B cell (primary cell): ENCODE measurements at regions of chr9 and their contacts with region 1.

Region 1: DNA sequence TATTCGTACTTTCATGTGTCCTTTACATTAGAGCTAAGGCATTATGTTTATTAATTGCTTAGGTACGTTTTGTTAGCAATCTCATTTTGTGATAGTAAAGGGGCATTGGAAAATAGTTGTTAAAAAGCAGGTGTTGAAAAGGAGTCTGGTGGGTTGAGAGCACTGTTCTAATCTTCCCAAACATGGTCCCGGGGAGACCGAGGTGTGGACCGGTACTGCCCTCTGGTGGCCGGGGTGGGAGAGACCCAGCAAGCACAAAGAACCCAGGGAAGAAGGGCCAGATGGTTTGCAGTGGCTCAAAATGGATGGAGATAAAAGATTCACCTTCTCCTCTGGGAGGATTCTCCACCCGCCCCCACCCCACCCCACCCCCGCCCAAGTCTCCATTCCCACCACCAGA is 26.1 kb downstream of the IDNK start:
- DNase-seq: peak; percentile 72
- ATAC-seq: peak; percentile 88
- H3K4me3 ChIP-seq: no peak overlapping the region
- H3K4me3 Mint-ChIP-seq: no peak overlapping the region
- H3K27ac ChIP-seq: no peak overlapping the region
- H3K27ac Mint-ChIP-seq: no peak overlapping the region
- H3K4me1 ChIP-seq: no peaks in the 10 kb centered on the region
- H3K4me1 Mint-ChIP-seq: peaks cover 5% of the 10 kb centered on the region
- H3K27me3 ChIP-seq: no peaks in the 10 kb centered on the region
- H3K27me3 Mint-ChIP-seq: no peaks in the 10 kb centered on the region
- CTCF ChIP-seq: peak; percentile 76

Region 2: DNA sequence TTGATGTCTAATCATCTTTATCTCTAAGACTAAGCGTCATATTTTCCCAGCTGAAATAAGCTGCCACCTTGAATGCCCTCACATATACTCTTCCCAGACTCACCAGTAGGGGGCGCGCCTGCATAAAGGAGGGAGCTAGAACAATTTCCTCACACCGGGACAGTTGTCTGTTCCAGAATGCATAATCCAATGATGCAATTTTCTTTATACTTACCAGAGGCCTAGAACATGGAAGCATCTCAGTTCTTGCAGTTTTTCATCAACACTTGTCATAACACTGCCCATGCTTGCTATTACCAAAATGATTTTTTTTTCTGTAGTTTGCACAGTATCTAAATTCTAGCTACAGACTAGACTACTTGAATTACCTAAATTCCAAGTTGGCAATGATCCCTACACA is 314.8 kb before region 1 on chr9:
- CTCF ChIA-PET with region 1: interaction called, 7 read pairs
- POLR2A ChIA-PET with region 1: no interaction called
- intact Hi-C with region 1: loop called (anchors 5 kb)
- DNase-seq: peak; percentile 56
- ATAC-seq: no peak
- H3K4me3 ChIP-seq: no peak overlapping the region
- H3K4me3 Mint-ChIP-seq: no peak overlapping the region
- H3K27ac ChIP-seq: no peak overlapping the region
- H3K27ac Mint-ChIP-seq: no peak overlapping the region
- H3K4me1 ChIP-seq: no peaks in the 10 kb centered on the region
- H3K4me1 Mint-ChIP-seq: no peaks in the 10 kb centered on the region
- H3K27me3 ChIP-seq: no peaks in the 10 kb centered on the region
- H3K27me3 Mint-ChIP-seq: no peaks in the 10 kb centered on the region
- CTCF ChIP-seq: peak; percentile 67

Region 3: DNA sequence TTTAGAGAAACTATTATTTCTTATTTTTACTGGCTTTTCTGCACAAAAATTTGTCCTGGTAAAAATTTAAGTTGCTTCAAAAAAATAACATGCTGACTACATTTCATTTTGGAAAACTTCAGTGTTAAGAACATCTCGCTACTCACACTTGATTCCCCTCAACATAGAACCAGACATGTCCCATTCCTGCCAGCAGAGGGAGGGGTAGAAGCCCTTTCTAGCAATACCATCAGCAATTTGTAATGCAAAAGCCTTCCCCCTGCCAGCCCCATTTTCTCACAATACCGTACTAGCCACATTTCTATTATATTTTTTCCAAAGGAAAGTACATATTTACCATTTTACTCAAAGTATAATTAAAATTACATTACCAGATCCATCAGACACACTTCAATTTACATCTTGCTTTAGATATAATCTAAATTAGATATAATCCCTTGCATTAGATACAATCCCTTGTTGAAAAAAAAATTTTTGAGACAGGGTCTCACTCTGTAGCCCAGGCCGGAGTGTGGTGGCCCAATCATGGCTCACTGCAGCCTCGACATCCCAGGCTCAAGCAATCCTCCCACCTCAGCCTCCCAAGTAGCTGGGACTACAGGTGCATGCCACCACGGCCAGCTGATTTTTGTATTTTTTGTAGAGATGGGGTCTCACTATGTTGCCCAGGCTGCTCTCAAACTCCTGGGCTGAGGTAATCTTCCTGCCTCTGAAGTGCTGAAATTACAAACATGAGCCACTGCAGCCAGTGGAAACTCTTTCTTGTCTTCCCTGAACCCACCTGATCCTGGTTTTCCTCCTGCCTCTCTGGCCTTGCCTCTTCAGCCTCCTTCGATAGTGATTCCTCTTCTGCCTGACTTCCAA is 65.7 kb before region 1 on chr9:
- CTCF ChIA-PET with region 1: interaction called, 3 read pairs
- POLR2A ChIA-PET with region 1: no interaction called
- intact Hi-C with region 1: loop called (anchors 1 kb)
- DNase-seq: peak; percentile 44
- ATAC-seq: peak; percentile 31
- H3K4me3 ChIP-seq: no peak overlapping the region
- H3K4me3 Mint-ChIP-seq: no peak overlapping the region
- H3K27ac ChIP-seq: no peak overlapping the region
- H3K27ac Mint-ChIP-seq: no peak overlapping the region
- H3K4me1 ChIP-seq: no peaks in the 10 kb centered on the region
- H3K4me1 Mint-ChIP-seq: no peaks in the 10 kb centered on the region
- H3K27me3 ChIP-seq: no peaks in the 10 kb centered on the region
- H3K27me3 Mint-ChIP-seq: no peaks in the 10 kb centered on the region
- CTCF ChIP-seq: peak; percentile 76

Region 4: GRCh38 chr9:83622939-83623678 is 26.0 kb before region 1 on chr9 and contains the start of gene IDNK:
- CTCF ChIA-PET with region 1: interaction called, 78 read pairs
- POLR2A ChIA-PET with region 1: interaction called, 3 read pairs
- intact Hi-C with region 1: loop called (anchors 1 kb)
- DNase-seq: peak; percentile 85
- ATAC-seq: peak; percentile 88
- H3K4me3 ChIP-seq: peak within 1 kb of the TSS; percentile 47 to 87 (median 79)
- H3K4me3 Mint-ChIP-seq: peak within 1 kb of the TSS; percentile 94
- H3K27ac ChIP-seq: peak within 1 kb of the TSS; percentile 76 to 88
- H3K27ac Mint-ChIP-seq: peak within 1 kb of the TSS; percentile 98
- H3K4me1 ChIP-seq: peaks cover 9 to 21% of the 10 kb centered on the region in 2 donors
- H3K4me1 Mint-ChIP-seq: peaks cover 33% of the 10 kb centered on the region
- H3K27me3 ChIP-seq: no peaks in the 10 kb centered on the region
- H3K27me3 Mint-ChIP-seq: no peaks in the 10 kb centered on the region
- CTCF ChIP-seq: no peak
- total RNA-seq, gene IDNK: 11.2 and 11.6 TPM in 2 replicates

Region 5: GRCh38 chr9:83636813-83637212 is 12.3 kb before region 1 on chr9:
- CTCF ChIA-PET with region 1: interaction called, 30 read pairs
- POLR2A ChIA-PET with region 1: no interaction called
- intact Hi-C with region 1: no loop called
- DNase-seq: no peak
- ATAC-seq: no peak
- H3K4me3 ChIP-seq: no peak overlapping the region
- H3K4me3 Mint-ChIP-seq: no peak overlapping the region
- H3K27ac ChIP-seq: no peak overlapping the region
- H3K27ac Mint-ChIP-seq: no peak overlapping the region
- H3K4me1 ChIP-seq: no peaks in the 10 kb centered on the region
- H3K4me1 Mint-ChIP-seq: no peaks in the 10 kb centered on the region
- H3K27me3 ChIP-seq: no peaks in the 10 kb centered on the region
- H3K27me3 Mint-ChIP-seq: no peaks in the 10 kb centered on the region
- CTCF ChIP-seq: no peak

Region 6: DNA sequence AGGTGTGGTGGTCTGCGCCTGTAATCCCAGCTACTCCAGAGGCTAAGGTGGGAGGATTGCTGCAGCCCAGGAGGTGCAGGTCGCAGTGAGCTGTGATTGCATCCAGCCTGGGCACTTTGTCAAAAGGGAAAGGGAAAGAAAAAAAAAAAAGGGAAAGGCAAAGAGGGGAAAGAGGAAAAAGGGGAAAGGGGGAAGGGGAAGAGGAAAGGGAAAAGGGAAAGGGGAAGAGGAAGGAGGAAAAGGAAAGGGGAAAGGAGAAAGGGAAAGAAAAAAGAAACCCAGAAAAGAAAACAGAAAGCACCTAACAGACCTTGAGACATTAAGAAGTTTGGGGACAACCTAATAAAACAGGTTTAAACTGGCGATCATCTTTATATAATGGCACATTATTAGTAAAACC is 13.9 kb after region 1 on chr9:
- CTCF ChIA-PET with region 1: interaction called, 12 read pairs
- POLR2A ChIA-PET with region 1: no interaction called
- intact Hi-C with region 1: no loop called
- DNase-seq: no peak
- ATAC-seq: no peak
- H3K4me3 ChIP-seq: no peak overlapping the region
- H3K4me3 Mint-ChIP-seq: no peak overlapping the region
- H3K27ac ChIP-seq: no peak overlapping the region
- H3K27ac Mint-ChIP-seq: no peak overlapping the region
- H3K4me1 ChIP-seq: peaks cover 10 to 12% of the 10 kb centered on the region in 2 donors
- H3K4me1 Mint-ChIP-seq: peaks cover 21% of the 10 kb centered on the region
- H3K27me3 ChIP-seq: no peaks in the 10 kb centered on the region
- H3K27me3 Mint-ChIP-seq: no peaks in the 10 kb centered on the region
- CTCF ChIP-seq: no peak

Region 7: DNA sequence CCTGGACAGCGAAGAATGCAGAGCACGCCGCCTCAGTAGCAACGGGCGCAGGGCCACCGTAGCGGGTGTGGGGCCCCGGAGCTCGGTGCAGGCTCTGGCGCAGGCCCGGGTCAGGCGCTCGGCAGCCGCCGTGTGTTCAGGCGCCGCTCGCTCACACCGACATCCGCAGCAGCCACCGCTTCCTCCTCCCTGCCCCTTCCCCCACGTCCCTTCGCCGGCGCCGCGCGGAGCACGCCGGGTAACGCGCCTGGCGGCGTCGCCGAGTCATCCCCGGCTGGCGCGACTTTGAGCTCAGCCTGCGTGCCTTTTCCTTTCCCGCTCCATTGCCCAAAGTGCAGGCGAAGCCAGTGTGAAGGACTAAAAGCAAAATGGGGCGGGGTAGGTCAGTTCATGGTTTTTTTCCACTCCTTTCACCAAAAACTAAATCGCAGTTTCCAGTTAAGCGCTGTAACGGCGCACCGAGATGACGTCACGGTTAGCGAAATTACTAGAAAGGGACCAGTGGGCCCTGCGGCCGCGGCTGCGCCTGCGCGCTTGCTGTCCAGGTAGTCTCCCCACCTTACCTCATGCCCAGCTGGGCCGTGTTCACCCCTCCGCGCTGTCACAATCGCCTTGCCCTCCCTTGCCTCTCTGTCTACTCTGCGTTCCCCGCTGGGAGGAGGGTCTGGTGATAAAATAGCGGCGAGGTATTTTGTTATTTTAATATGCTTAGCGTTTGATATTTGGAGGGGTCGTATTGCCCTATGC is 58.9 kb after region 1 on chr9 and contains the start of gene UBQLN1:
- CTCF ChIA-PET with region 1: interaction called, 6 read pairs
- POLR2A ChIA-PET with region 1: no interaction called
- intact Hi-C with region 1: loop called (anchors 2 kb)
- DNase-seq: peak; percentile 97
- ATAC-seq: peak; percentile 83
- H3K4me3 ChIP-seq: peak within 1 kb of the TSS; percentile 75 to 95 (median 87)
- H3K4me3 Mint-ChIP-seq: peak within 1 kb of the TSS; percentile 93
- H3K27ac ChIP-seq: peak within 1 kb of the TSS; percentile 95 to 96
- H3K27ac Mint-ChIP-seq: peak within 1 kb of the TSS; percentile 95
- H3K4me1 ChIP-seq: peaks cover 20% of the 10 kb centered on the region in 2 donors
- H3K4me1 Mint-ChIP-seq: peaks cover 46% of the 10 kb centered on the region
- H3K27me3 ChIP-seq: no peaks in the 10 kb centered on the region
- H3K27me3 Mint-ChIP-seq: no peaks in the 10 kb centered on the region
- CTCF ChIP-seq: no peak
- total RNA-seq, gene UBQLN1: 101 and 108 TPM in 2 replicates